PC-3 (cell line): ENCODE measurements at regions of chr3 and their contacts with region 1.

Region 1: DNA sequence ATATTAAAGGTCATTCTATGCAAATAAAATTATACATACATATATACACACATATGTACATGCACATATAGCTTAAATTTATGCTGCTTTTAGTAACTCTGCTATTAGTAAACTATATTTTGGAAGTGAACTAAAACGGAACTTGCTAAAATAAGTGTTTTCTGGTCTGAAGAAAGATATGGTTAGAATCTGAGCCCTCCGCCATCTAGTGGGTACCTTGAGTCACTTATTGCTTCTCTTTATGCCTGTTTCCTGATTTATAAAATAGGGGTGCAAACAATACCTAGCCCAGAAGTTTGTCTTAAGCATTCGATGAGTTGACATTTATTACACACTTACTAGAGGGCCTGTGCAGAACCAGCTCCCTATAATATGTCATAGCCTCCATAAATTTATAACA is 255.7 kb downstream of the CNTN6 start:
- DNase-seq: no peak
- ATAC-seq: no peak
- H3K4me3 ChIP-seq: no peak overlapping the region
- H3K27ac ChIP-seq: no peak overlapping the region
- H3K4me1 ChIP-seq: no peaks in the 10 kb centered on the region
- H3K27me3 ChIP-seq: no peaks in the 10 kb centered on the region
- CTCF ChIP-seq: no peak

Region 2: GRCh38 chr3:1087066-1087560 is 261.4 kb before region 1 on chr3:
- CTCF ChIA-PET with region 1: interaction called, 18 read pairs
- POLR2A ChIA-PET with region 1: no interaction called
- intact Hi-C with region 1: no loop called
- DNase-seq: peak; percentile 7
- ATAC-seq: no peak
- H3K4me3 ChIP-seq: no peak overlapping the region
- H3K27ac ChIP-seq: no peak overlapping the region
- H3K4me1 ChIP-seq: no peaks in the 10 kb centered on the region
- H3K27me3 ChIP-seq: no peaks in the 10 kb centered on the region
- CTCF ChIP-seq: no peak

Region 3: GRCh38 chr3:1207904-1208303 is 140.6 kb before region 1 on chr3:
- CTCF ChIA-PET with region 1: no interaction called
- POLR2A ChIA-PET with region 1: no interaction called
- intact Hi-C with region 1: no loop called
- DNase-seq: no peak
- ATAC-seq: no peak
- H3K4me3 ChIP-seq: no peak overlapping the region
- H3K27ac ChIP-seq: no peak overlapping the region
- H3K4me1 ChIP-seq: no peaks in the 10 kb centered on the region
- H3K27me3 ChIP-seq: no peaks in the 10 kb centered on the region
- CTCF ChIP-seq: no peak